ENCODE measurements at regions of chr3 and their contacts with region 1.

Region 1: GRCh38 chr3:171459942-171460724 is at the start of gene TNIK:
- DNase-seq: peak; percentile 98
- H3K4me3 Mint-ChIP-seq: peak within 1 kb of the TSS; percentile 96
- H3K27ac Mint-ChIP-seq: peak within 1 kb of the TSS; percentile 91
- H3K4me1 Mint-ChIP-seq: peaks cover 46% of the 10 kb centered on the region
- H3K27me3 Mint-ChIP-seq: no peaks in the 10 kb centered on the region
- total RNA-seq, gene TNIK: 24.5 and 27.4 TPM in 2 replicates

Region 2: DNA sequence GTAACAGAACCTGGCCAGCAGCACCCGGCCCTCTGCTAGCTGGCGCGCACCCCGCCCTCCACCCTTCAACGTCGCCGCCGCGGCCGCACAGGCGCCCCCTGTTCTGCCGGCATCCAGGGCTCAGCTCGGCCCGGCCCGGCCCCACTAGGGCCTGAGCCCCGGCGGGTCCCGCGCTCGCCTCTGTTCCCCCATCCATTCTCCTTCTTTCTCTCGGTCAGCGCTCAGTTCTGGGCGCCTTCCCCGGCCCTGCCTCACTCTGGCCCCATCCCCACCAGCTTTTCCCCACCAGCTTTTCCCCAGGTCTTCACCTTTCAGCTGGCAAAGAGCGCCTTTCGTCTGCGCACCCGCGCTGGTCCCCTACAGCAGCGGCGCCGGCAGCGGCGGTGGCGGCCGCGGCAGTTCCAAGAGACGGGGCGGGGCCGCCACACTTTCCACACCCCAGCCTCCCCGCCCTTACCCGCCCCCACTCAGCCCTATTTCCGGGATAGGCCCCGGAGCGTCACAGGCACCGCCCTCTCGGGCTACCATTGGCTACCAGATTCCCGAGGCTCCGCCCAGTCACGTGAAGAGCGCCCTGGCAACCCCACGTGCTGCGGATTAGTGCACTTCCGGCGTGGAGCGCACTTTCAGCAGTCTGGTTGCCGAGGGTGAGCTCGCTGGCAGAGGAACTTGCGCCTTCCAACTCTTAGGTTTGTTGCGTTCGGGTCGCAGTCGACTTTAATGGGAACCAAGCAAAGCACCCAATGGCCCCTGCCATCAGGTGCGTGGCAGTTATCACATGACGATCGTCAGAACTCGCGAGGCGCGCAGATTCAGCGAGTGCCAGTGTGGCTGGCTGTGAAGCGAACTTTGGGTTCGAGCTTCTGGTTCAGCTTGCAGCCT is 551.7 kb before region 1 on chr3 and contains the start of gene EIF5A2:
- intact Hi-C with region 1: loop called (anchors 10 kb)
- DNase-seq: peak; percentile 97
- H3K4me3 Mint-ChIP-seq: peak within 1 kb of the TSS; percentile 99
- H3K27ac Mint-ChIP-seq: peak within 1 kb of the TSS; percentile 95
- H3K4me1 Mint-ChIP-seq: peaks cover 19% of the 10 kb centered on the region
- H3K27me3 Mint-ChIP-seq: peaks cover 15% of the 10 kb centered on the region
- total RNA-seq, gene EIF5A2: 8.7 and 9.7 TPM in 2 replicates

Region 3: GRCh38 chr3:171248425-171249111 is 211.6 kb before region 1 on chr3:
- intact Hi-C with region 1: loop called (anchors 2 kb)
- DNase-seq: peak; percentile 60
- H3K4me3 Mint-ChIP-seq: no peak overlapping the region
- H3K27ac Mint-ChIP-seq: no peak overlapping the region
- H3K4me1 Mint-ChIP-seq: peaks cover 34% of the 10 kb centered on the region
- H3K27me3 Mint-ChIP-seq: no peaks in the 10 kb centered on the region

Region 4: DNA sequence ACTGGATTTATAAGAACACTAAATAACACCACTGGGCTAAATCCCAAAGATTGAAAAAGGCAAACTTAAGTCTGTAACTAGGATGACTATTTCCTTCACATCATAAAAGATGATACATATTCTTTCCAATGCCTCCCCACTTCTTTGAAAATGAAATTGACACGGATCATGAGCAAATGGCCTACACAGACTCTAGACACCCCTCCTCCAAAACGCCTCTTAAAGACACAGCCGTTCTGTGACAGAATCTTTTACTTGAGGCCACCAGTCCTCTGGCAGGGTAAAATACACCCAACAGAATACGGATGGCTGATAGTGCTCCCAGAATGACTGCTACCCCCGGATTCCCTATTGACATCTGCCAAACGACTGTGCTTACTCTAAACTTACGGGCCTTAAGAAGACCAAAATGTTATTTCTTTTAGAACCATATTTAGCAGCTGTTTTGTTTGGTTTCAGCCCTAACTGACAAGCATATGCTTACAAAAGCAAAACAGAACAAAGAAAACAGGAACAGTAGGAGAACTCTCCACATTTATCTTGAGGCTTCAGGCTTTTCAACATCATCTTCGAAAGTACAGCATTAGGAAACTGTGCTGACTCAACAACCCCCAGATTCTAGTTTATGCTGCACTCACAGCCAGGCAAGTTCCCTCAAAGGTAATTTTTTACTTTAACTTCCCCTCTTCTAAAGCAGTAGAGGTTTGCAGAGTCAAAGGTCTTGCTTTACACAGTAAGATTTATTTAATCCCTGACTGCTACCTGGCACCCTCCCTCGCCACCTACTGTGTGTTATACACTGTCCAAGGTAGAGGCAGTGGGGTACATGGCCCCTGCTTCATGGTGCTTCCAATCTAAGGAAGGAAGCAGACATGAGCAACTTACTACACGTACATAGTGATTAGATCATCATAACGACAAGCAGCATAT is 84.2 kb before region 1 on chr3:
- intact Hi-C with region 1: loop called (anchors 5 kb)
- DNase-seq: no peak
- H3K4me3 Mint-ChIP-seq: no peak overlapping the region
- H3K27ac Mint-ChIP-seq: peak overlapping the region; percentile 22
- H3K4me1 Mint-ChIP-seq: peaks cover 21% of the 10 kb centered on the region
- H3K27me3 Mint-ChIP-seq: no peaks in the 10 kb centered on the region

Region 5: DNA sequence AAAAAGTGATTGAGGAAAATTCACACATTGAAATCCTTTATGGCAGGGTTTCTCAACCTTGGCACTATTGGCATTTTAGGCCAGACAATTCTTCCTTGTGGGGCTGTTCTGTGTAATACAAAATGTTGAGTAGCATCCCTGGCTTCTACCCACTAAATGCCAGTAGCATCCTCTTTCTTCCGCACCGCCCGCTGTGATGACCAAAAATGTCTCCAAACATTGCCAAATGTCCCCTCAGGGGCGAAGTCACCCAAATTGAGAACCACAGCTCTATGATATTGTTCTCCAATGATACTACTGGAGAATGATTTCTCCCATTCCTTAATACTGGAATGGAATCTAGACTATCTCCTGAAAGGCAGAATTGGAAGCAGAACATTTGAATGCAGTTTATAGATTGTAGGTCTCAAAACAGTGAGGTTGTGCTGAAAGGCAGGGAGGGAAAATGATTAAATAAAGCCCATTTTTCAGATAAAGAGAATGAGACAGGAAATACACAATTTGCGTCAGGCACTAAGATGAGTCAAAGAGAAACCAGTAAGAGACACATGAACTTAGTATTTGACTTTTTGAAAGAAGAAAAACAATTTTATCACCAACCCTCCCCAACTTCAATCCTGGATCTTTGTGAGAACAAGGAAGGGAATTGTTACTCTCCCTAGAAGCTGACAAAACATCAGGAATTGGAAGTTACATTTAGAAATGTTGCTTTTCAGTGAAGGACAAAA is 101.6 kb after region 1 on chr3:
- intact Hi-C with region 1: loop called (anchors 2 kb)
- DNase-seq: peak; percentile 65
- H3K4me3 Mint-ChIP-seq: peak overlapping the region; percentile 77
- H3K27ac Mint-ChIP-seq: peak overlapping the region; percentile 96
- H3K4me1 Mint-ChIP-seq: peaks cover 46% of the 10 kb centered on the region
- H3K27me3 Mint-ChIP-seq: no peaks in the 10 kb centered on the region

Measured in activated CD4-positive, alpha-beta T cell treated with anti-CD3 and anti-CD28 coated beads, Interleukin-2, amount 10 ng/mL, durations not matched to agents 24 days and 14 days (primary cell).